Activated naive CD4-positive, alpha-beta T cell treated with anti-CD3 and anti-CD28 coated beads for 36 hours (primary cell): ENCODE measurements at regions of chr12 and their contacts with region 1.

Region 1: DNA sequence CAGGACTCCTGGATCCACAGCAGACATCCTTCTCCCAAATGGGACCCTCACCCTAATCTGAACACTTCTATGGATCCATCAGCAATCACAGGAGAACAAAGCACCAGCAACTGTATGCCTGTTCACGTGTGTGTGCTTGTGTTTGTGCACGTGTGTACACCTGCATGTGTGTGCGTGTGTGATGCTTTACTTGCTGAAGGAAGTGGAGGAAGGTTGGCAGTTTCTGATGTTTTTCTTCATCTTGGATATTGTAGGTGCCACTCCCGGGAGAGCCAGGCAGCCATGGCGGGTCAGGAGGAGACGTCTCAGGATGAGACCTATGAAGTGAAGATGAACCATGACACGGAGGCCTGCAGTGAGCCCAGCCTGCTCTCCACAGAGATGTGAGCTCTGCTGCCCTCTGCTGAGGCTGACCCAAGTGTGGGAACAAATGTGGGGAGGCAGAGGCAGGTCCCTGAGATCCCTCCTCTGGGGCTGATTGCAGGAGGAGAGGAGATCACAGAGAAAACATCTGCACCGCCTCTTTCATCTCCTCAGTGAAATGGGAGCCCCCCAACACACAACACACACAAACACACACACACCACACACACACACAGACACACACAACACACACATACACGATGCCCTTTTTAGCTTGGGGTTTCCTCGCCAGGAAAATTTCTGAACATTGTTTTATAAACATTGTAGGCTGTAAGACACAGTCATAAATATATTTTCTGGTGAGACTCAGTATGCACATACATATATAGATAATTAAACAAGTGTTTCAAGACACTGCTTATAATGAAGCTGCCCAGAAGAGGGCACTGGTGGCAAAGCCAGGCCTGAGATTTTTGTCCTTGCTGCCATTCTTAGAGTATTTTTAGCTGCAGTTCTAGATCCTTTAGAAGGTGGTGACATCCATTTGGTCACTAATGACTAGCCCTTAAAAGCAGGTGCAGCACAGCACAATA is 112.2 kb upstream of the FKBP4 start:
- DNase-seq: peak; percentile 71
- H3K4me3 Mint-ChIP-seq: no peak overlapping the region
- H3K27ac Mint-ChIP-seq: peak overlapping the region; percentile 3
- H3K4me1 Mint-ChIP-seq: peaks cover 5% of the 10 kb centered on the region
- H3K27me3 Mint-ChIP-seq: no peaks in the 10 kb centered on the region

Region 2: DNA sequence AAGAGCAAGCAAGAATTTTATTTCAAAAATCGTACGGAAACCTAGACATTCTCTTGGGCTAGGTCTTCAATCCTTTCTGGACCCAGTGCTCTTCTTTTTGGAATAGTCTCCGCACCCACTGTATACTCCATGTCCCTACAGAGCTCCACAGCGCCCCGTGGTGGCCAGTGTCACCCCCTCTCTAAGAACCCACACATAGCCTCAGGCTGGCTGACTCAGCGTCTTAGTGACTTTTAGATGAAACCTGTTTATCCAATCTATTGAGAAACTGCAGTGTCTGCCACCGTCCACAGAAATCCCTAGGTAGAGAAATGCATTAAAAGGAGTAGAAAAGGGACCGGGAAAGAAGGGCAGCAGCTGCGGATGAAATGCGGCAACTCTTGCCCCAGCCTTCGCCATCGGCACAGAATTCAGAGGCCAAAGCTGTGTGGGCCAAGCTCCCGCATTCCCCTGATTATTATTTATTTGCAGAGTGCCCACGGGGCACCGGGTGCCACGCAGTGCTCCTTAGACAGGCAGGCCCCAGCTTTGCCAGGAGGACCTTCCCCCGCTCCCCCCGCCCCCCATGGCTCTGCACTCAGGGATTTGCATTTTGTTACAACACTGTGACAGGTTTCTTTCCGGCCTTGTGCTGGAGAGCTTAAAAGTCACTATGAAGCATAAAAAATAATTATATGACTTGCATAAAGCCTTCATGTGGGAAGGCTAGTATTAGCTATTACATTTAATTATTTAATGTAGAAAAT is 57.9 kb before region 1 on chr12:
- CTCF ChIA-PET with region 1: no interaction called
- intact Hi-C with region 1: no loop called
- DNase-seq: peak; percentile 47
- H3K4me3 Mint-ChIP-seq: no peak overlapping the region
- H3K27ac Mint-ChIP-seq: no peak overlapping the region
- H3K4me1 Mint-ChIP-seq: peaks cover 4% of the 10 kb centered on the region
- H3K27me3 Mint-ChIP-seq: peaks cover 48% of the 10 kb centered on the region

Region 3: DNA sequence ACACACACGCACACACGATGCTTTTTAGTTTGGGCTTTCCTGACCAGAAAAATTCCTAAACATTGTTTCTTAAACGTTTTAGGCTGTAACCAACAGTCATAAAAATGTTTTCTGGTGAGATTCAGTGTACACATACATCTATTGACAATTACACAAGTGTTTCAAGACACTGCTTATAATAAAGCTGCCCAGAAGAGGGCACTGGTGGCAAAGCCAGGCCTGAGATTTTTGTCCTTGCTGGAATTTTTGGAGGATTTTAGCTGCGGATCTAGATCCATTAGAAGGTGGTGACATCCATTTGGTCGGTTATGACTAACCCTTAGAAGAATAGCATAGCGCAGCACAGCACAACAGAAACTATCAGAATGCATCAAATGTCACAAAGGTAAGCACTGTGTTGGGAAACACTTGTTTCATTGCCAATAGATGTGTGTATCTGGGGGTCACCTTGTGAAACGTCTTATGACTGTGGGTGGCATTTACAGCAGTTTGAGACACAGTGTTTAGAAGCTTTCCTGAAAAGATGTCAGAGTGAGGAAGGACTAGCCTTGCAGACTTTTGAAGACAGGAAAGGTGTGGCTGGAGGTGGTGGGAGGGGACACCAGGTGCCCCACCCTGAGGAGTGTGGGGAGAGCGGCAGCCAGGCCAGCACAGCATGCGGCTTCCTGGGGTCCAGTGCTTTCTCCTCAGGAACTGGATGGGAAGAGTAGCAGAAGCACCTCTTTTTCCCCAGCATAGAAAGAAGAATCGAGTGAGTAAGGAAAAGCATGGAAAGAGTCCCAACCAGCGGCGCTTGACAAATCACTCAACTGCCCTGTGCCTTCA is 57.5 kb after region 1 on chr12:
- CTCF ChIA-PET with region 1: no interaction called
- intact Hi-C with region 1: loop called (anchors 10 kb)
- DNase-seq: no peak
- H3K4me3 Mint-ChIP-seq: no peak overlapping the region
- H3K27ac Mint-ChIP-seq: no peak overlapping the region
- H3K4me1 Mint-ChIP-seq: no peaks in the 10 kb centered on the region
- H3K27me3 Mint-ChIP-seq: peaks cover 2% of the 10 kb centered on the region

Region 4: GRCh38 chr12:2783936-2784600 is 101.5 kb after region 1 on chr12:
- CTCF ChIA-PET with region 1: interaction called, 42 read pairs
- intact Hi-C with region 1: loop called (anchors 5 kb)
- DNase-seq: peak; percentile 60
- H3K4me3 Mint-ChIP-seq: peak overlapping the region; percentile 62
- H3K27ac Mint-ChIP-seq: no peak overlapping the region
- H3K4me1 Mint-ChIP-seq: peaks cover 8% of the 10 kb centered on the region
- H3K27me3 Mint-ChIP-seq: peaks cover 11% of the 10 kb centered on the region